ENCODE measurements at regions of chr4 and their contacts with region 1.

Region 1: DNA sequence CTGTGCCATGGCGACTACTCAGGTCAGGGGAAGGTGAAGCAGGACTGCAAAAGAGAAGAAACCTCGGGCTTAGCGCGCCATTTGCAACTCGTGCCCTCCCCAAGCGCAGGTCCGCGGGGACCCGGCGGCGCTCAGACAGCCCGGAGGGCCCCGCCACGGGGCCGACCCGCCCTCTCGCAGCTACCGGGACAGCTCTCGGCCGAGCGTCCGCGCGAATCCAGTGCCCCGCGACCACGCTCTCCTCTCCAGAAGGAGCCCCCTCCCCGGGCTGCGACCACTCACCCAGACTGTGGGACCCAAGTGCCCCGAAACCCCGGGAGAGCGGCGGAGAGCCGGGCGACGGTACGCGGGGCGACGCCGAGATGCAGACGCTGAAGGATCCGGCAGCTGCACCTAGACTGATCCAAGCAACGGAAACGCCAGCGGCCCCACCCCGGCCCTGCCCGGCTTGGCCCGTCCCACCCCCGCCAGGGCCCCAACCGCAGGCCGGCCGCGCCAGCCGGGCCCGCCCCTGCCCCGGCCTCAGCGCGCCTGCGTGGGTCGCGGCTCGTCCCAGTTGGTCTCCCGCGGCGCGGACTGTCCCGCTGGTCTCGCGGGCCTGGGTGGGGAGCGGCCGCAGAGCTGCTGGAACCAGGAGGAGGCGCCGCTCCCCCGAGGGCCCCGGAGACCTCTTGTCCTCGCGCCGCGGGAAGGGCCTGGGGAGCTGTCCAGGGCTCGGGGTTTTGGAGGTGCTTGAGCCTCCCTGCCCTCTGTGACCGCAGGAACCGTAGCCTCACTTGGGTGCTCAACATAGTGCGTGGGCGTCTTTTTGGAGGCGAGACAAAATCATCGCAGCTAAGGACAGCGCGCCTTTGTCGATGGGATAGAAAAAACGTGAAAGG is at the start of gene ANXA5:
- DNase-seq: peak; percentile 88
- ATAC-seq: peak; percentile 94
- H3K4me3 ChIP-seq: peak within 1 kb of the TSS; percentile 99
- H3K27ac ChIP-seq: peak within 1 kb of the TSS; percentile 99
- H3K4me1 ChIP-seq: peaks cover 8% of the 10 kb centered on the region
- H3K27me3 ChIP-seq: no peaks in the 10 kb centered on the region
- CTCF ChIP-seq: peak; percentile 61
- POLR2A ChIP-seq: peak; percentile 96
- RAD21 ChIP-seq: peak; percentile 67
- total RNA-seq, gene ANXA5: 780 and 1,163 TPM in 2 replicates

Region 2: GRCh38 chr4:121711263-121712000 is 14.6 kb after region 1 on chr4:
- CTCF ChIA-PET with region 1: interaction called, 4 read pairs
- POLR2A ChIA-PET with region 1: interaction called, 10 read pairs
- dilution Hi-C with region 1: no loop called
- in situ Hi-C with region 1: no loop called
- intact Hi-C with region 1: loop called (anchors 1 kb)
- DNase-seq: peak; percentile 97
- ATAC-seq: peak; percentile 99
- H3K4me3 ChIP-seq: peak overlapping the region; percentile 23; the same call in 1 of the 2 replicates
- H3K27ac ChIP-seq: peak overlapping the region; percentile 84
- H3K4me1 ChIP-seq: peaks cover 7% of the 10 kb centered on the region
- H3K27me3 ChIP-seq: no peaks in the 10 kb centered on the region
- CTCF ChIP-seq: no peak
- POLR2A ChIP-seq: peak; percentile 93
- RAD21 ChIP-seq: peak; percentile 19; the same call in 1 of the 2 replicates

Measured in IMR-90 (cell line).